Heart right ventricle (tissue), 16 donors: ENCODE measurements at regions of chrX and their contacts with region 1.

Region 1: GRCh38 chrX:53678667-53679066 is 7.9 kb downstream of the HUWE1 start:
- DNase-seq: no peak
- ATAC-seq: no peak
- H3K4me3 ChIP-seq: no peak overlapping the region
- H3K27ac ChIP-seq: no peak overlapping the region
- H3K4me1 ChIP-seq: peaks cover 0 to 50% (median 19%) of the 10 kb centered on the region in 9 donors
- H3K27me3 ChIP-seq: peaks cover 0 to 14% (median 0%) of the 10 kb centered on the region in 7 donors
- CTCF ChIP-seq: peak in 2 of 9 donors; percentile 5 to 20

Region 2: GRCh38 chrX:53616946-53617345 is 61.7 kb before region 1 on chrX:
- intact Hi-C with region 1: loop called in 1 of 10 experiments (anchors 10 kb)
- DNase-seq: no peak
- ATAC-seq: no peak
- H3K4me3 ChIP-seq: no peak overlapping the region
- H3K27ac ChIP-seq: no peak overlapping the region
- H3K4me1 ChIP-seq: no peaks in the 10 kb centered on the region
- H3K27me3 ChIP-seq: peaks cover 0 to 17% (median 0%) of the 10 kb centered on the region in 7 donors
- CTCF ChIP-seq: no peak

Region 3: GRCh38 chrX:53631156-53631555 is 47.5 kb before region 1 on chrX:
- intact Hi-C with region 1: no loop called
- DNase-seq: no peak
- ATAC-seq: no peak
- H3K4me3 ChIP-seq: no peak overlapping the region
- H3K27ac ChIP-seq: no peak overlapping the region
- H3K4me1 ChIP-seq: no peaks in the 10 kb centered on the region
- H3K27me3 ChIP-seq: peaks cover 0 to 10% (median 0%) of the 10 kb centered on the region in 7 donors
- CTCF ChIP-seq: no peak